Sigmoid colon (tissue), 7 donors: ENCODE measurements at regions of chr17 and their contacts with region 1.

Region 1: GRCh38 chr17:59311130-59311920 is 20.1 kb upstream of the YPEL2 start:
- DNase-seq: no peak
- H3K4me3 ChIP-seq: no peak overlapping the region
- H3K27ac ChIP-seq: no peak overlapping the region
- H3K4me1 ChIP-seq: peaks cover 0 to 8% (median 0%) of the 10 kb centered on the region in 4 donors
- H3K27me3 ChIP-seq: no peaks in the 10 kb centered on the region
- CTCF ChIP-seq: peak in 3 of 4 experiments; percentile 72 to 83 (median 76)
- EP300 ChIP-seq: no peak
- POLR2A ChIP-seq: no peak

Region 2: DNA sequence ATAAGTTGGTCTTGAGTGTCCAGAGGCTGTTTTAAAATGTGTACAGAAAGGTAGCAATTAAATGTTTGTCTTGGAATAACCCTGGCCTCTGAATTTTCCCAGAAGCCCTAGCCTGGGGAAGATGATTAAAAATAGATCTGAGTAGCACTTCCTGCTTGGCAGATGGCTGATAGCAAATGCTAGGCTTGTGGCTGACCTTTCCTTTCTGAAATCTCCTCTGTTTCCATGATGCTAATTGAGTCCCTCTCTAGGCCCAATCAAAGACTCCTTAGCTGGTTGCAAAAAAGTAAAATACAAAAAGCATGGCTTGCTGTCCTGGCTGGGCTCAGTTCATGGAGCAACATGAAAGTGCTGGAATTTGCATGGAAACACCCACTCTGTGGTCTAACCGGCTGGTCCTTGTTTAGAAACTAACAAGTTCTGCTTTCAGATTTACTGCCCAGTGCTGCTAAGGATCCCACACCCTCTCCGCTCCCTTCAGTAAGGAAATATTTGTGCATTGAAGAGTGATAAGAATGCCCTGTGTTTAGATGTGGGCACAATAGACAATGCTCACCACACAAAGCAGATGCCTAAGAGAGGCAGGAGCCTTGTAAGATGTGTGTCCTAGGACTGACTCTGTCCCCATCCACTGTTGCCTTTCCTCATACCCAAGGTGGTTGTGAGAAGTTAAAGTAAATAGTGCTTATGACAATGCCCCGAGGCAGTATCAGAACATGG is 61.0 kb after region 1 on chr17:
- intact Hi-C with region 1: no loop called
- DNase-seq: peak; percentile 86
- H3K4me3 ChIP-seq: peak overlapping the region in 1 of 4 donors; percentile 3
- H3K27ac ChIP-seq: peak overlapping the region; percentile 87 to 95 (median 92)
- H3K4me1 ChIP-seq: peaks cover 0 to 100% (median 96%) of the 10 kb centered on the region in 4 donors
- H3K27me3 ChIP-seq: no peaks in the 10 kb centered on the region
- CTCF ChIP-seq: no peak
- EP300 ChIP-seq: peak in 2 of 4 donors; percentile 49 to 53
- POLR2A ChIP-seq: no peak

Region 3: GRCh38 chr17:59521204-59522126 is 210.1 kb after region 1 on chr17:
- intact Hi-C with region 1: loop called (anchors 5 kb)
- DNase-seq: peak; percentile 73
- H3K4me3 ChIP-seq: no peak overlapping the region
- H3K27ac ChIP-seq: no peak overlapping the region
- H3K4me1 ChIP-seq: peaks cover 0 to 8% (median 0%) of the 10 kb centered on the region in 4 donors
- H3K27me3 ChIP-seq: no peaks in the 10 kb centered on the region
- CTCF ChIP-seq: peak; percentile 42 to 88 (median 70)
- EP300 ChIP-seq: no peak
- POLR2A ChIP-seq: no peak